HEK293T (cell line): ENCODE measurements at regions of chr21 and their contacts with region 1.

Region 1: GRCh38 chr21:45309069-45309986 is 21.6 kb upstream of the POFUT2 start:
- DNase-seq: peak; percentile 87

Region 2: GRCh38 chr21:45294509-45295291 is 14.6 kb before region 1 on chr21:
- CTCF ChIA-PET with region 1: interaction called, 16 read pairs
- POLR2A ChIA-PET with region 1: interaction called, 5 read pairs
- DNase-seq: peak; percentile 69